Activated T-helper 1 cell treated with anti-CD3 and anti-CD28 coated beads, Interleukin-12 subunit alpha, Interleukin-12 subunit beta, Interleukin-2, Interleukin-4 antibody, amounts not matched to agents 30 ng/mL and 10 ng/mL and 1 ng/mL, durations not matched to agents 14 hours and 24 hours and 36 hours (primary cell): ENCODE measurements at regions of chr1 and their contacts with region 1.

Region 1: GRCh38 chr1:21607549-21608529 is 61.3 kb downstream of the RAP1GAP start:
- DNase-seq: peak; percentile 65
- H3K4me3 Mint-ChIP-seq: peak overlapping the region; percentile 59
- H3K27ac Mint-ChIP-seq: peak overlapping the region; percentile 7
- H3K4me1 Mint-ChIP-seq: peaks cover 17% of the 10 kb centered on the region
- H3K27me3 Mint-ChIP-seq: peaks cover 4% of the 10 kb centered on the region

Region 2: GRCh38 chr1:21397813-21398188 is 210.0 kb before region 1 on chr1:
- intact Hi-C with region 1: no loop called
- DNase-seq: no peak
- H3K4me3 Mint-ChIP-seq: peak overlapping the region; percentile 22
- H3K27ac Mint-ChIP-seq: no peak overlapping the region
- H3K4me1 Mint-ChIP-seq: no peaks in the 10 kb centered on the region
- H3K27me3 Mint-ChIP-seq: peaks cover 33% of the 10 kb centered on the region

Region 3: GRCh38 chr1:21622466-21623315 is 14.9 kb after region 1 on chr1:
- intact Hi-C with region 1: loop called (anchors 1 kb)
- DNase-seq: peak; percentile 38
- H3K4me3 Mint-ChIP-seq: peak overlapping the region; percentile 42
- H3K27ac Mint-ChIP-seq: no peak overlapping the region
- H3K4me1 Mint-ChIP-seq: no peaks in the 10 kb centered on the region
- H3K27me3 Mint-ChIP-seq: peaks cover 20% of the 10 kb centered on the region

Region 4: DNA sequence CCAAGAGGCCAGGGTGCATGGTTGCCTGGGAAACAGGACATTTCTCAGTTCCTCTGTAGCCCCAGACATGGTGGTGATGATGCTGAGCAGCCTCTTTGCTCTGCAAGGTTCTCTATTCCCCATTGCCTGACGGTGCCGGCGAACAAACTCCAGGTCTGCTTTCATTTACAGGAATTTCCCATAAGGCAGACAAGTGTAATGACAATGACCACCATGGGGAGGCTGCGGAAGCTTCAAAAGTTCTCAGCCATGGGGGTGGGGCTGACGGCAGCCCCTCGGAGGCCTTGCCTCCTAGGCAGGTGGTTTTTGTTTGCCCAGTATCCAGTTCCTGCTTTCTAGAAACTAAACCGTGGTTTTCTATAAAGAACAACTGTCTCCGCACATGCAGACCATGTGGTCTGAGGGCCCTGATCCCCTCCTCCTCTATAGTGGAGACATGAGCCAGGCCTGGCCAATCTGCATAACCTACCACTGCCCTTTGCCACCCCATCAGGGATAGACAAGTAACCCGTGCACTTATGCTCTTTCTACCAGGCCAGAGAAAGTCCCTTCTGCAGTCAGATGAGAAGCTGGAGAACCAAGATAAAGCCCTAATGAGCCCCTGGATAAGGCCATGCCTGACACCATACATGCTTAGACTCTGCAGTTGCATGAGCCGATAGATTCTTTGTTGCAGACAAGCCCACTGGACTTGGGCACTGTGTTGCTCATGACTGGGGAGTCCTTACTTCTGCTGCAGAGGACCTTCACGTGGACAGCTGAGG is 258.3 kb after region 1 on chr1:
- intact Hi-C with region 1: no loop called
- DNase-seq: no peak
- H3K4me3 Mint-ChIP-seq: no peak overlapping the region
- H3K27ac Mint-ChIP-seq: no peak overlapping the region
- H3K4me1 Mint-ChIP-seq: no peaks in the 10 kb centered on the region
- H3K27me3 Mint-ChIP-seq: no peaks in the 10 kb centered on the region